Heart left ventricle (tissue), 16 donors: ENCODE measurements at regions of chr1 and their contacts with region 1.

Region 1: DNA sequence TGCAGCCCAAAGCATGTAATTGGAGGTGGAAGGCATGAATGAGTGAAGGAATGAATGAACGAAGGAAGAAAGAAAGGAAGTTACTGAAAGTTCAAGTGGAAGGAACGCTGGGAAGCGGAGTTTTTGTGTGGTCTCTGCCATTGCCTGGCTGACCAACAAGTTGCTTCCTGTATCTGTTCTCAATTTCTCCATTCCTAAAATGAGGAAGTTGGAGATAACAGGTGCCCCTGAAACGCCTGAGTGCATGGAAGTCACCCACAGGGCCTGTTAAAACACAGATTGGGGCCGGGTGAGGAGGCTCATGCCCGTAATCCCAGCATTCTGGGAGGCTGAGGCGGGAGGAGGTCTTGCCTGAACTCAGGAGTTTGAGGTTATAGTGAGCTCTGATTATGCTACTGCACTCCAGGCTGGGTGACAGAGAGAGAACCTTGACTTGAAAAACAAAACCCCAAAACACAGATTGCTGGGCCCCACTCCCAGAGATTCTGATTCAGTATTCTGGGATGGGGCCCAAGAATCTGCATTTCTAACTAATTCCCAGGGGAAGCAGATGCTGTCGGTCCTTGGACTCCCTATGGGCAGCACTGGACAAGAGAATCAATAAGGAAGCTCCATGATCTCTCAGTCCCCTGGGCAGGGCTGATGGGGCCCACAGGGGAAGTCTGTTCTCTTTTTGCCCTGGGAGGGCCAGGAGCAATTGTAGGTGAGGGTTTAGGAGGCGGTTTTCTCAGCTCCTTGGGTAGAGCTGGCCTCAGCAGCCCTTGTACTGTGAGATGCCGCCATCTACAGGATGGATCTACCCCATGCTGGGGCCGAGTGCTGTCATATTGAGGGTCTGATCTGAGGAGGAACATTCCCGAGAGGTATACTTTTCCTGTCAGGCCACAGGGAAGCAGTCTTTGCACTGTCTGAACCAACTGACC is 3.3 kb upstream of the CNR2 start:
- DNase-seq: peak; percentile 51 to 71 (median 68)
- ATAC-seq: peak; percentile 69 to 85 (median 79)
- H3K4me3 ChIP-seq: no peak overlapping the region
- H3K27ac ChIP-seq: peak overlapping the region in 1 of 12 donors; percentile 64
- H3K4me1 ChIP-seq: peaks cover 0 to 48% (median 6%) of the 10 kb centered on the region in 12 donors
- H3K27me3 ChIP-seq: no peaks in the 10 kb centered on the region
- CTCF ChIP-seq: peak; percentile 24 to 68 (median 56)
- POLR2A ChIP-seq: no peak

Region 2: GRCh38 chr1:23772049-23772853 is 144.2 kb before region 1 on chr1:
- intact Hi-C with region 1: loop called in 4 of 10 experiments (anchors 5 to 10 kb)
- DNase-seq: peak; percentile 82 to 91 (median 86)
- ATAC-seq: peak; percentile 29 to 86 (median 82)
- H3K4me3 ChIP-seq: no peak overlapping the region
- H3K27ac ChIP-seq: no peak overlapping the region
- H3K4me1 ChIP-seq: peaks cover 0 to 41% (median 16%) of the 10 kb centered on the region in 12 donors
- H3K27me3 ChIP-seq: no peaks in the 10 kb centered on the region
- CTCF ChIP-seq: peak; percentile 84 to 94 (median 92)
- POLR2A ChIP-seq: no peak

Region 3: DNA sequence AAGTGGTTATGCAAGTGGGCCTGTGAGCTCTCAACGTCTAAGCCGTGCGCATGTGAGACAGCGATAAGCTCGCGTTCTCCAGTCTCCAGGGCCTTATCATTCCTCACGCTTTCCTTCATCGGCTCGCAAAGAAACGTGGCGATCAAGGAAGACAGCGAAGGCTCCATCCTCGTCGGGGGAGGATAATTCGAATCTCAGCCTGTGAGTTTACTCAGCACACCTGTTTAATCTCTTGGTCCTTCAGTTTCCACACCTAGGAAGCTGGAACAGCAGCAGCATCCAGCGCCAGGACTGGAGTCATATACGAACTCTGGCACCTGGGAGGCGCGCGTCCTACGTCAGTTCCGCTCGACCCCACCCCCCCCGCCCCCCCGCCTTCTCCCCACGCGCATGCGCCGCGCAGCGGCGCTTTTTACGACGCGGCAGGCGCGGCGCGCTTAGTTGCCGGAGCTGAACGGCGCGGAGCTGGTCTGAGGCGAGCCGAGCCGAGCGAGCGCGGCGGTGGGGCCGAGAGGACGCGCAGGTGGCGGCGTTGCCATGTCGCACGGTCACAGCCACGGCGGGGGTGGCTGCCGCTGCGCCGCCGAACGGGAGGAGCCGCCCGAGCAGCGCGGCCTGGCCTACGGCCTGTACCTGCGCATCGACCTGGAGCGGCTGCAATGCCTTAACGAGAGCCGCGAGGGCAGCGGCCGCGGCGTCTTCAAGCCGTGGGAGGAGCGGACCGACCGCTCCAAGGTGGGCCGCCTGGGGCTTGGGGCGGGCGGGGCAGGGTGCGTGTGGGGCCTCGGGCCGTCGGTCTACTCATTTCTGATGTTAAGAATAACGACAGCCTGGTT is 138.3 kb before region 1 on chr1 and contains the start of gene PITHD1:
- intact Hi-C with region 1: loop called in 4 of 10 experiments (anchors 5 to 10 kb)
- DNase-seq: peak; percentile 78 to 90 (median 82)
- ATAC-seq: peak; percentile 87 to 94 (median 90)
- H3K4me3 ChIP-seq: peak within 1 kb of the TSS; percentile 66 to 100 (median 93)
- H3K27ac ChIP-seq: peak within 1 kb of the TSS; percentile 7 to 97 (median 89)
- H3K4me1 ChIP-seq: peaks cover 4 to 44% (median 30%) of the 10 kb centered on the region in 12 donors
- H3K27me3 ChIP-seq: no peaks in the 10 kb centered on the region
- CTCF ChIP-seq: no peak
- POLR2A ChIP-seq: peak; percentile 83 to 89
- total RNA-seq, gene PITHD1: 34.8 to 59.2 (median 46.2) TPM

Region 4: DNA sequence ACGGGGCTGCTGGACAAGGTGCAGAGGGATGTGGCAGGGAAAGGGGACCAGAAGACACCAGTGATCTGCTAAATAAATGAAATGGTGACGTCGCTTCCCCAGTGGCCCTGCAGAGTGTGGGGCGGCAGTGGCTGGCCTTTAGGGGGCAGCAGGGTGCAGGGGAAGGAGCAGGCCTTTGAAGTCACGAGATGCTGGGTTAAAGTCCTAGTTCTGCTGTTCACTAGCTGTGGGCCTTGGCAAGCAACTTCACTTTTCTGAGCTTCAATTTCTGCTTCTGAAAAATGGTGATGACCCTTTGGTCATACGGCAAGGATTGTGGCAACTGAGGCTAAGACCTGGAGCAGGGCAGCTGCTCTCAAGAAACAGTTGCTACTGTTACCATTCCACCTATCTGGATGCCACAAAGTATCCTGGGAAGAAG is 106.7 kb before region 1 on chr1:
- intact Hi-C with region 1: loop called in 5 of 10 experiments (anchors 2 to 10 kb)
- DNase-seq: peak; percentile 72 to 85 (median 76)
- ATAC-seq: peak; percentile 67 to 93 (median 85)
- H3K4me3 ChIP-seq: no peak overlapping the region
- H3K27ac ChIP-seq: peak overlapping the region in 1 of 12 donors; percentile 69
- H3K4me1 ChIP-seq: peaks cover 0 to 31% (median 0%) of the 10 kb centered on the region in 12 donors
- H3K27me3 ChIP-seq: no peaks in the 10 kb centered on the region
- CTCF ChIP-seq: peak; percentile 60 to 90 (median 74)
- POLR2A ChIP-seq: no peak

Region 5: GRCh38 chr1:24142546-24143534 is 226.4 kb after region 1 on chr1 and contains the start of gene IL22RA1:
- intact Hi-C with region 1: no loop called
- DNase-seq: peak in 2 of 5 donors; percentile 23 to 50
- ATAC-seq: peak; percentile 43 to 75 (median 59)
- H3K4me3 ChIP-seq: peak within 1 kb of the TSS in 11 of 12 donors; percentile 6 to 55 (median 39)
- H3K27ac ChIP-seq: peak within 1 kb of the TSS in 1 of 12 donors; percentile 38
- H3K4me1 ChIP-seq: peaks cover 0 to 13% (median 5%) of the 10 kb centered on the region in 12 donors
- H3K27me3 ChIP-seq: no peaks in the 10 kb centered on the region
- CTCF ChIP-seq: no peak
- POLR2A ChIP-seq: no peak
- total RNA-seq, gene IL22RA1: 0.19 to 1.3 (median 0.49) TPM in 6 of 9 donors, not detected in the others